ENCODE measurements at regions of chr19 and their contacts with region 1.

Region 1: GRCh38 chr19:48588670-48589399 is 17.7 kb upstream of the SPACA4 start:
- H3K4me3 ChIP-seq: peak overlapping the region; percentile 47
- H3K27ac ChIP-seq: no peak overlapping the region
- H3K4me1 ChIP-seq: no peaks in the 10 kb centered on the region
- CTCF ChIP-seq: peak; percentile 100

Region 2: DNA sequence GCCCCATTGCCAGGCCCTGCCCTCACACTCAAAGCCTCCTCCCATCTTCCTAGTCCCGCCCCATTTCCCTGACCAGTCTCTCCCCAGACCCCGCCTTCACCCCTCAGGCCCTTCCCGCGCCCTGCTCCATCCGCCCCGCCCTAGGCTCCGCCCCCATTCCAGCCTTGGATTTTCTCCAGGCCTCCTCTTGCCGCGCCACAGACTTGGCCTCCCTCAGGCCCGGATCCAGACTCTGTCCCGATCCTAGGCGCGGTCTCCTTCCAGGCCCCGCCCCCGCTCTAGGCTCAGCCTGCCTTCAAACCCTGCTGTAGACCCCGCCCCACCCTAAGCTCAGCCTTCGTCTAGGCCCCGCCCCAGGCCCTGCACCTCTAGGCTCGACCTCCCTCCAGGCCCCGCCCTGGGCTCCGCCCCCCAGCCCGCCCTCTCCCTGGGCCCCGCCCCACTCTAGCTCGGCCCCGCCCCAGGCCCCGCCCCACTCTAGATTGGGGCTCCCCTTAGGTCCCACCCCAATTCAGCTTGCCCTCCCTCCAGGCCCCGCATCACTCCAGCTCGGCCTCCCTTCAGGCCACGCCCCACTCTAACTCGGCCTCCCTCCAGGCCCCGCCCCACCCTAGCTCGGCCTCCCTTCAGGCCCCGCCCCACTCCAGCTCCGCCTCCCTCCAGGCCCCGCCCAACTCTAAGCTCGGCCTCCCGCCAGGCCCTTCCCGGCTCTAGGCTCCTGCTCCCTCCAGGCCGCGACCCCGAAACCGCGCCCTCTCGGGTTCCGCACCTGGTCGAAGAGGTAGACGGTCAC is 95.7 kb before region 1 on chr19:
- CTCF ChIA-PET with region 1: interaction called, 170 read pairs
- POLR2A ChIA-PET with region 1: interaction called, 15 read pairs
- H3K4me3 ChIP-seq: peak overlapping the region; percentile 23
- H3K27ac ChIP-seq: no peak overlapping the region
- H3K4me1 ChIP-seq: peaks cover 6% of the 10 kb centered on the region
- CTCF ChIP-seq: no peak

Region 3: GRCh38 chr19:48513289-48514122 is 75.3 kb before region 1 on chr19:
- CTCF ChIA-PET with region 1: interaction called, 272 read pairs
- POLR2A ChIA-PET with region 1: interaction called, 5 read pairs
- H3K4me3 ChIP-seq: peak overlapping the region; percentile 61
- H3K27ac ChIP-seq: no peak overlapping the region; the same call in 1 of the 2 replicates
- H3K4me1 ChIP-seq: no peaks in the 10 kb centered on the region
- CTCF ChIP-seq: peak; percentile 22; the same call in 1 of the 2 replicates

Region 4: GRCh38 chr19:48571378-48572162 is 17.3 kb before region 1 on chr19:
- CTCF ChIA-PET with region 1: interaction called, 28 read pairs
- POLR2A ChIA-PET with region 1: interaction called, 7 read pairs
- H3K4me3 ChIP-seq: no peak overlapping the region
- H3K27ac ChIP-seq: no peak overlapping the region
- H3K4me1 ChIP-seq: peaks cover 8% of the 10 kb centered on the region
- CTCF ChIP-seq: no peak